CD14-positive monocyte (primary cell): ENCODE measurements at regions of chr17 and their contacts with region 1.

Region 1: GRCh38 chr17:75261336-75262111 is at the starts of genes GGA3 and MRPS7:
- DNase-seq: peak; percentile 88 to 92 (median 91)
- H3K4me3 ChIP-seq: peak within 1 kb of the TSS; percentile 81 to 97 (median 89)
- H3K4me3 Mint-ChIP-seq: peak within 1 kb of the TSS; percentile 98 to 99
- H3K27ac ChIP-seq: peak within 1 kb of the TSS; percentile 90 to 99
- H3K27ac Mint-ChIP-seq: peak within 1 kb of the TSS; percentile 98 to 100 (median 99)
- H3K4me1 ChIP-seq: peaks cover 43 to 50% of the 10 kb centered on the region in 2 donors
- H3K4me1 Mint-ChIP-seq: peaks cover 64% of the 10 kb centered on the region
- H3K27me3 ChIP-seq: no peaks in the 10 kb centered on the region
- H3K27me3 Mint-ChIP-seq: peaks cover 0 to 2% (median 0%) of the 10 kb centered on the region in 3 donors
- CTCF ChIP-seq: no peak
- polyA plus RNA-seq, gene GGA3: 4.3 to 162 (median 15.7) TPM
- polyA plus RNA-seq, gene MRPS7: 26.7 to 122 (median 101) TPM

Region 2: GRCh38 chr17:75034236-75034908 is 227.2 kb before region 1 on chr17:
- intact Hi-C with region 1: loop called in 1 of 2 experiments (anchors 10 kb)
- DNase-seq: peak; percentile 65 to 72 (median 66)
- H3K4me3 ChIP-seq: peak overlapping the region; percentile 45 to 82 (median 52)
- H3K4me3 Mint-ChIP-seq: peak overlapping the region; percentile 94 to 95
- H3K27ac ChIP-seq: no peak overlapping the region
- H3K27ac Mint-ChIP-seq: peak overlapping the region; percentile 42 to 82 (median 68)
- H3K4me1 ChIP-seq: peaks cover 42 to 55% of the 10 kb centered on the region in 2 donors
- H3K4me1 Mint-ChIP-seq: peaks cover 50% of the 10 kb centered on the region
- H3K27me3 ChIP-seq: peaks cover 5 to 22% of the 10 kb centered on the region in 2 donors
- H3K27me3 Mint-ChIP-seq: peaks cover 30 to 41% (median 36%) of the 10 kb centered on the region in 3 donors
- CTCF ChIP-seq: no peak

Region 3: GRCh38 chr17:75205037-75205792 is 56.3 kb before region 1 on chr17 and contains the start of gene NUP85:
- intact Hi-C with region 1: loop called in 1 of 2 experiments (anchors 2 kb)
- DNase-seq: peak; percentile 82 to 83 (median 82)
- H3K4me3 ChIP-seq: peak within 1 kb of the TSS; percentile 59 to 93 (median 77)
- H3K4me3 Mint-ChIP-seq: peak within 1 kb of the TSS; percentile 91 to 96
- H3K27ac ChIP-seq: peak within 1 kb of the TSS; percentile 92 to 93
- H3K27ac Mint-ChIP-seq: peak within 1 kb of the TSS; percentile 94 to 99 (median 99)
- H3K4me1 ChIP-seq: peaks cover 19 to 25% of the 10 kb centered on the region in 2 donors
- H3K4me1 Mint-ChIP-seq: peaks cover 21% of the 10 kb centered on the region
- H3K27me3 ChIP-seq: no peaks in the 10 kb centered on the region
- H3K27me3 Mint-ChIP-seq: no peaks in the 10 kb centered on the region
- CTCF ChIP-seq: no peak
- polyA plus RNA-seq, gene NUP85: 36.3 to 94.2 (median 38.7) TPM

Region 4: GRCh38 chr17:75589012-75589918 is 327.7 kb after region 1 on chr17:
- intact Hi-C with region 1: loop called in 1 of 2 experiments (anchors 10 kb)
- DNase-seq: peak; percentile 81 to 91 (median 86)
- H3K4me3 ChIP-seq: peak overlapping the region; percentile 65 to 88 (median 80)
- H3K4me3 Mint-ChIP-seq: peak overlapping the region; percentile 83 to 87
- H3K27ac ChIP-seq: peak overlapping the region; percentile 88 to 89
- H3K27ac Mint-ChIP-seq: peak overlapping the region in 6 of 7 donors; percentile 75 to 87 (median 84)
- H3K4me1 ChIP-seq: peaks cover 21 to 30% of the 10 kb centered on the region in 2 donors
- H3K4me1 Mint-ChIP-seq: peaks cover 16% of the 10 kb centered on the region
- H3K27me3 ChIP-seq: no peaks in the 10 kb centered on the region
- H3K27me3 Mint-ChIP-seq: peaks cover 0 to 2% (median 0%) of the 10 kb centered on the region in 3 donors
- CTCF ChIP-seq: peak; percentile 75